ENCODE measurements at regions of chr5 and their contacts with region 1.

Region 1: GRCh38 chr5:100903039-100903887 is at the start of gene ST8SIA4:
- DNase-seq: peak; percentile 90
- H3K4me3 Mint-ChIP-seq: peak within 1 kb of the TSS; percentile 96
- H3K27ac Mint-ChIP-seq: peak within 1 kb of the TSS; percentile 99
- H3K4me1 Mint-ChIP-seq: peaks cover 41% of the 10 kb centered on the region
- H3K27me3 Mint-ChIP-seq: no peaks in the 10 kb centered on the region
- total RNA-seq, gene ST8SIA4: 63.1 and 65.2 TPM in 2 replicates

Region 2: DNA sequence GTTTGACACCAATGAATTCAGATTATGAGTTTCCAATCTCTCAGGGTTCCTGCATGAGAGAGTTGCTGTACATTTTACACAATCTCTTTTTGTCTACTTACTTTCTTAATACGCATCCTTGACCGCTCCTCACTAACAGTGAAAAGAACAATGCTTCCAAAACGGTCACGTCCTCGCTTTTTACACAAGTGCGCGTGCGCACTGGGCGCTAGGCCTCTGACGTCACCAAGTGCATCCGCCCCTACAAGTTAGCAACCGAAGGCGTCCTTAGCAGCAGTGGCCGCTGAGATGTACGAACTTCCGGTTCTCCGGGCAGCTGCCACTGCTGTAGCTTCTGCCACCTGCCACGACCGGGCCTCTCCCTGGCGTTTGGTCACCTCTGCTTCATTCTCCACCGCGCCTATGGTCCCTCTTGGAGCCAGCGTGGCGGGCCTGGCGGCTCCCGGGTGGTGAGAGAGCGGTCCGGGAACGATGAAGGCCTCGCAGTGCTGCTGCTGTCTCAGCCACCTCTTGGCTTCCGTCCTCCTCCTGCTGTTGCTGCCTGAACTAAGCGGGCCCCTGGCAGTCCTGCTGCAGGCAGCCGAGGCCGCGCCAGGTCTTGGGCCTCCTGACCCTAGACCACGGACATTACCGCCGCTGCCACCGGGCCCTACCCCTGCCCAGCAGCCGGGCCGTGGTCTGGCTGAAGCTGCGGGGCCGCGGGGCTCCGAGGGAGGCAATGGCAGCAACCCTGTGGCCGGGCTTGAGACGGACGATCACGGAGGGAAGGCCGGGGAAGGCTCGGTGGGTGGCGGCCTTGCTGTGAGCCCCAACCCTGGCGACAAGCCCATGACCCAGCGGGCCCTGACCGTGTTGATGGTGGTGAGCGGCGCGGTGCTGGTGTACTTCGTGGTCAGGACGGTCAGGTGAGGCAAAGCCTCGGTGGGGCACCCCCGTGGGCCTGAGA is 367.9 kb before region 1 on chr5 and contains the start of gene FAM174A:
- intact Hi-C with region 1: loop called (anchors 1 kb)
- DNase-seq: peak; percentile 92
- H3K4me3 Mint-ChIP-seq: peak within 1 kb of the TSS; percentile 92
- H3K27ac Mint-ChIP-seq: peak within 1 kb of the TSS; percentile 99
- H3K4me1 Mint-ChIP-seq: peaks cover 25% of the 10 kb centered on the region
- H3K27me3 Mint-ChIP-seq: peaks cover 6% of the 10 kb centered on the region
- total RNA-seq, gene FAM174A: 8.2 and 9.7 TPM in 2 replicates

Region 3: DNA sequence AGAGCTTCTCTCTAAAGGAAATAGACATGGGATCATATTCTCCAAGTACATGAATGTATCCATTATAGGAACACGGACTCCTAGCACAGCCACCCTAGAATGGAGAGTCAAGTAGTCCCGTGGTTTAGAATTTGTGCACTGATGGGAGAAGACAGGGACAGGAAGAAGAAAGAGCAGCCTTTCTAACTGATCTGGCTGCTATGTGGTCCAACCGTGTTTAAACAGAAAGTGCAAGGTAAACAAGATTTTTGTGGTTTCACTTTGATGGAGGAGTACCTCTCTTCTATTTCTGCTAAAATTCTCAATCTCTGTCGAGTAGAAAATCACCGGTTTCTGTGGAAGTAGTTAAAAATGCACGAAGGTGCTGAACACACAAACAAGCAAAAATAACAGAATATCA is 171.5 kb before region 1 on chr5:
- intact Hi-C with region 1: loop called (anchors 5 kb)
- DNase-seq: peak; percentile 20
- H3K4me3 Mint-ChIP-seq: peak overlapping the region; percentile 71
- H3K27ac Mint-ChIP-seq: peak overlapping the region; percentile 81
- H3K4me1 Mint-ChIP-seq: peaks cover 14% of the 10 kb centered on the region
- H3K27me3 Mint-ChIP-seq: no peaks in the 10 kb centered on the region

Region 4: GRCh38 chr5:100790170-100790665 is 113.0 kb before region 1 on chr5:
- intact Hi-C with region 1: no loop called
- DNase-seq: no peak
- H3K4me3 Mint-ChIP-seq: peak overlapping the region; percentile 15
- H3K27ac Mint-ChIP-seq: peak overlapping the region; percentile 53
- H3K4me1 Mint-ChIP-seq: peaks cover 23% of the 10 kb centered on the region
- H3K27me3 Mint-ChIP-seq: no peaks in the 10 kb centered on the region

Region 5: DNA sequence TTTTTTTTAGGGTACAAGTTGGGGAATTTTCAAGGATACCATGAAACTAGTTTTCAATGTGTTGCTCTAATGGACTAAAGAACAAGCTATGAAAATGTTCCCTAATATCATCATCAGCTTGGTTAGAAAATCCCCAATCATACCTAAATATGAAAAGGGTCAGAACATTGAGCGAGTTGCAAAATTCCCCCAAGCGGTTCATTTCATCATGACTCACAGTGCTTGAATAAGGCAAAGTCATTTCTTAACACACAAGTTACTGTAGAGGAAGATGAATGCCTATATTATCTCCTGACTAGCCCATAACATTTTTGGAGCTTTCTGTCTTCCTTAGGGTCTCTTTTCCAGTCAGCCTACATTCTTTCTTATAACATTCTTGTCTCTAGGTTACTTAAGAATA is 62.9 kb before region 1 on chr5:
- intact Hi-C with region 1: loop called (anchors 1 kb)
- DNase-seq: peak; percentile 22
- H3K4me3 Mint-ChIP-seq: no peak overlapping the region
- H3K27ac Mint-ChIP-seq: peak overlapping the region; percentile 95
- H3K4me1 Mint-ChIP-seq: peaks cover 71% of the 10 kb centered on the region
- H3K27me3 Mint-ChIP-seq: no peaks in the 10 kb centered on the region

Region 6: DNA sequence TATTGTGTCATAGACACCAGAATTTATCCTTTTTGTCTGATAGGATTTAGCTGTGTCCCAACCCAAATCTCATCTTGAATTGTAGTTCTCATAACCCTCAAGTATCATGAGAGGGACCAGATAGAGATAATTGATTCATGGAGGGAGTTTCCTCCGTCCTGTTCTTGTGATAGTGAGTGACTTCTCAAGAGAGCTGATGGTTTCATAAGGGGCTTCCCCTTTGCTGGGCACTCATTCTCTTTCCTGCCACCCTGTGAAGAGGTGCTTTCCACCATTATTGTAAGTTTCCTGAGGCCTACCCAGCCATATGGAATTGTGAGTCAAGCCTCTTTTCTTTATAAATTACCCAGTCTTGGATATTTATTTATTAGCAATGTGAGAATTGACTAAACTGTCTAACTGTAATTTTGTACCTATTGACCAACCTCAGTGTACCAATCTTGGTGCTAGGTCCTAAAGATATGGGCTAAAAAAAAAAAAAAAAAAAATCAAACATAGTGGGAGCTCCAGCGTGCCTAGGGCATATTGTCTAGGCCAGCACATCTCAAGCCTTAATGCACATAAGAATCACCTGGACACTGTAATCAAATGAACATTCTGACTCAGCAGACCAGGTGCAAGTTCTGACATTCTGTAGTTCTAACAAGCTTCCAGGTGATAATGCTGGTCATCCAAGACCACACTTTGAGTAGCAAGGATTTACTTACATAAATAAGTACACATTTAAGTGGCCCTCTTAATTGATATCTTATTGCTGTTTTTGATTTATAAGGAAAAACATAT is 30.7 kb before region 1 on chr5:
- intact Hi-C with region 1: loop called (anchors 1 kb)
- DNase-seq: no peak
- H3K4me3 Mint-ChIP-seq: no peak overlapping the region
- H3K27ac Mint-ChIP-seq: peak overlapping the region; percentile 56
- H3K4me1 Mint-ChIP-seq: peaks cover 48% of the 10 kb centered on the region
- H3K27me3 Mint-ChIP-seq: no peaks in the 10 kb centered on the region

Region 7: GRCh38 chr5:101045689-101046088 is 142.4 kb after region 1 on chr5:
- intact Hi-C with region 1: loop called (anchors 1 kb)
- DNase-seq: no peak
- H3K4me3 Mint-ChIP-seq: no peak overlapping the region
- H3K27ac Mint-ChIP-seq: no peak overlapping the region
- H3K4me1 Mint-ChIP-seq: peaks cover 9% of the 10 kb centered on the region
- H3K27me3 Mint-ChIP-seq: peaks cover 3% of the 10 kb centered on the region